Sciatic nerve (tissue), 2 donors: ENCODE measurements at regions of chr1 and their contacts with region 1.

Region 1: GRCh38 chr1:82343381-82343780 is 542.6 kb downstream of the ADGRL2 start:
- DNase-seq: no peak
- ATAC-seq: no peak

Region 2: DNA sequence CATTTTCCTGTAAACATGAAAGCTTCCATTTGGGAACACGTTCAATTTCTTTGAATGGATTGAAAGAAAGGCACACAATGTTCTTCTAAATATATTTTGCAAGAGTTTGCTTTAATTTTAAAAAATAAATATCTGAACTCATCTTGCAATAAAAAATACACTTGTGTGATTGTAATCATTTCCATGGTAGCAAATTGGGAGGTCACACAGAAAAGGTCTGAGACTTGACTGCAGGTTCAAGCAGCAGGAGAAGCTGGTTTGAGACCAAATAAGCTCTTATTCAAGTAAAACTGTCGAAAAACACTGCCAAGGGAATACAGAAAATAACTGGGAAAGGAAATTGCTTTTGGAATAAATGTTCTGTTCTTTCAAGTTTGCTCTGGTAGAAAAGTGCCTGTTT is 43.7 kb before region 1 on chr1:
- intact Hi-C with region 1: loop called (anchors 2 kb)
- DNase-seq: no peak
- ATAC-seq: peak; percentile 94